ENCODE measurements at regions of chr1 and their contacts with region 1.

Region 1: DNA sequence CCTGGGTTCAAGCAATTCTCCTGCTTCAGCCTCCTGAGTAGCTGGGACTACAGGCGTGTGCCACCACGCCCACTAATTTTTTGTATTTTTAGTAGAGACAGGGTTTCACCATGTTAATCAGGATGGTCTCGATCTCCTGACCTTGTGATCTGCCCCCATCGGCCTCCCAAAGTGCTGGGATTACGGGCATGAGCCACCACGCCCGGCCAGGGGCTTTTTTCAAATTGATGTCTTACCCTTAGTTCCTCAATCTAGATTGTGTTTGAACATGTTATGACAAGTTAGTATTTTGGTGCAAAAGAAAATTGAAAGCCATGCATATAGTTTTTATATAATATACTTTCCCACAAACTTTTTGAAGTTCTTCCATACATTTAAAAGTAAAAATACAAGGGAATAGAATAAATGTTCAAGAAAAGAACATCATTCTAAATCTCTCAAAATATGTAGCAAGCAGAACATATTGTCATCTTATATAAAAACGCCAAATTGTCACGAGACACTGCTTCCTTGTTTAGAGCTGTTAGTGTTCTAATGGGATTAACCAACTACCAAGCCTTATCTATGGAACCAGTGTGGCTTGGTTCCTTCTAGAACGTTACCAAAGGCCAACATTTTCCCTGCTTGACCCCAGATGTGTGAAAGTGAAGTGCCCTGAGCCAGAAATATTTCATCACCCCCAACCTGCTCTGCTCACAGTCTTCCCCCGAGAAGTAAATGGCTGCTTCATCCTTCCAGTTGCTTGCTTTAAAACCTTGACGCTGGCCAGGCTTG is 9.5 kb upstream of the PLEKHM2 start:
- DNase-seq: no peak
- ATAC-seq: no peak
- H3K4me3 Mint-ChIP-seq: no peak overlapping the region
- H3K27ac Mint-ChIP-seq: no peak overlapping the region
- H3K4me1 Mint-ChIP-seq: peaks cover 21% of the 10 kb centered on the region
- H3K27me3 Mint-ChIP-seq: no peaks in the 10 kb centered on the region
- CTCF ChIP-seq: no peak

Region 2: GRCh38 chr1:15390667-15391066 is 283.9 kb before region 1 on chr1:
- CTCF ChIA-PET with region 1: no interaction called
- POLR2A ChIA-PET with region 1: no interaction called
- intact Hi-C with region 1: no loop called
- DNase-seq: no peak
- ATAC-seq: no peak
- H3K4me3 Mint-ChIP-seq: no peak overlapping the region
- H3K27ac Mint-ChIP-seq: no peak overlapping the region
- H3K4me1 Mint-ChIP-seq: peaks cover 10% of the 10 kb centered on the region
- H3K27me3 Mint-ChIP-seq: peaks cover 17% of the 10 kb centered on the region
- CTCF ChIP-seq: no peak

Region 3: GRCh38 chr1:15430787-15431570 is 243.6 kb before region 1 on chr1:
- CTCF ChIA-PET with region 1: no interaction called
- POLR2A ChIA-PET with region 1: no interaction called
- intact Hi-C with region 1: no loop called
- DNase-seq: peak; percentile 78
- ATAC-seq: peak; percentile 81
- H3K4me3 Mint-ChIP-seq: no peak overlapping the region
- H3K27ac Mint-ChIP-seq: no peak overlapping the region
- H3K4me1 Mint-ChIP-seq: no peaks in the 10 kb centered on the region
- H3K27me3 Mint-ChIP-seq: no peaks in the 10 kb centered on the region
- CTCF ChIP-seq: peak; percentile 71

Region 4: GRCh38 chr1:15595809-15596617 is 78.6 kb before region 1 on chr1:
- CTCF ChIA-PET with region 1: no interaction called
- POLR2A ChIA-PET with region 1: interaction called, 11 read pairs
- intact Hi-C with region 1: no loop called
- DNase-seq: no peak
- ATAC-seq: no peak
- H3K4me3 Mint-ChIP-seq: no peak overlapping the region
- H3K27ac Mint-ChIP-seq: no peak overlapping the region
- H3K4me1 Mint-ChIP-seq: no peaks in the 10 kb centered on the region
- H3K27me3 Mint-ChIP-seq: no peaks in the 10 kb centered on the region
- CTCF ChIP-seq: no peak

Measured in activated B cell treated with CpG ODN at 0.5 μM for 24 hours (primary cell).